Activated B cell treated with CpG ODN at 0.5 μM for 24 hours (primary cell): ENCODE measurements at regions of chr19 and their contacts with region 1.

Region 1: DNA sequence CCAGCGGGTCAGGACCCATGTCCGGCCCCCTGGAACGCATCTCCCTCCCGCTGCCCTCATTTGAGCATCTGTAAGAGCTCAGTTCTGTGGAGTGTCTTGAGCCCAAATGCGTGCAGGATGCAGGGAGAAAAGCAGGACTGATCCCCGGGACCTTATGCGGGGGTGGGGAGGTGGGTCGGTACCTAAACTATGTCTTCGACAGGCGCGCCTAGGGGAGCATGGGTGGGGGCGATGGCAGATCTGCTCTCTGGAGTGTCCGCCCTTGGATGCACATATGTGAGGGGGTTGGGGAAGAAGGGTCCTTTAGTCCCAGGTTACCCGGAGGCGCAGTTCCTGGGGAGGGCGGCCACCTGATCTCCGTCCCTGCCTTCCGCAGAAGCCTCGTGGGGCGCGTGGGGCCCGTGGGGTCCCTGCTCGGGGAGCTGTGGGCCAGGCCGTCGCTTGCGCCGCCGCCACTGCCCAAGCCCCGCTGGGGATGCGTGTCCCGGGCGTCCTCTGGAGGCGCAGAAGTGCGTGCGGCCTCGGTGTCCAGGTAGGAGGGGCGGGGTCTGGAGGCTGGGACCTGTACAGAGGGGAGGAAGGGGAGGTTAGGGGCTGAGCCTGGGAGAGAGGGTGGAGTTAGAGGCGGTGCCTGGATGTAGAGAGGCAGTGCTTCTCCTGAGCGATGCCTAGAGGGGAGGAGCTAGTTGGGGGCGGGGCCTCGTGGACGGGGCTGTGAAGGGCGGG is 2.8 kb downstream of the CILP2 start:
- DNase-seq: peak; percentile 55
- ATAC-seq: peak; percentile 78
- H3K4me3 Mint-ChIP-seq: peak overlapping the region; percentile 68
- H3K27ac Mint-ChIP-seq: no peak overlapping the region
- H3K4me1 Mint-ChIP-seq: peaks cover 28% of the 10 kb centered on the region
- H3K27me3 Mint-ChIP-seq: peaks cover 20% of the 10 kb centered on the region
- CTCF ChIP-seq: no peak

Region 2: GRCh38 chr19:19568802-19569756 is 28.2 kb after region 1 on chr19:
- CTCF ChIA-PET with region 1: no interaction called
- POLR2A ChIA-PET with region 1: interaction called, 10 read pairs
- intact Hi-C with region 1: no loop called
- DNase-seq: no peak
- ATAC-seq: no peak
- H3K4me3 Mint-ChIP-seq: no peak overlapping the region
- H3K27ac Mint-ChIP-seq: no peak overlapping the region
- H3K4me1 Mint-ChIP-seq: no peaks in the 10 kb centered on the region
- H3K27me3 Mint-ChIP-seq: no peaks in the 10 kb centered on the region
- CTCF ChIP-seq: no peak

Region 3: GRCh38 chr19:19597809-19598306 is 57.0 kb after region 1 on chr19:
- CTCF ChIA-PET with region 1: no interaction called
- POLR2A ChIA-PET with region 1: interaction called, 7 read pairs
- intact Hi-C with region 1: loop called (anchors 5 kb)
- DNase-seq: no peak
- ATAC-seq: peak; percentile 80
- H3K4me3 Mint-ChIP-seq: peak overlapping the region; percentile 62
- H3K27ac Mint-ChIP-seq: peak overlapping the region; percentile 89
- H3K4me1 Mint-ChIP-seq: peaks cover 67% of the 10 kb centered on the region
- H3K27me3 Mint-ChIP-seq: no peaks in the 10 kb centered on the region
- CTCF ChIP-seq: no peak

Region 4: GRCh38 chr19:19618219-19619051 is 77.6 kb after region 1 on chr19 and contains the start of gene PBX4:
- CTCF ChIA-PET with region 1: no interaction called
- POLR2A ChIA-PET with region 1: no interaction called
- intact Hi-C with region 1: no loop called
- DNase-seq: peak; percentile 98
- ATAC-seq: peak; percentile 95
- H3K4me3 Mint-ChIP-seq: peak within 1 kb of the TSS; percentile 85
- H3K27ac Mint-ChIP-seq: peak within 1 kb of the TSS; percentile 83
- H3K4me1 Mint-ChIP-seq: peaks cover 35% of the 10 kb centered on the region
- H3K27me3 Mint-ChIP-seq: no peaks in the 10 kb centered on the region
- CTCF ChIP-seq: no peak
- total RNA-seq, gene PBX4: 19.4 and 21.8 TPM in 2 replicates